Endothelial cell of umbilical vein (primary cell): ENCODE measurements at regions of chr5 and their contacts with region 1.

Region 1: GRCh38 chr5:43066799-43067741 is 27.0 kb upstream of the ANXA2R start:
- DNase-seq: peak; percentile 91
- H3K4me3 ChIP-seq: peak overlapping the region; percentile 24 to 76 (median 76)
- H3K27ac ChIP-seq: peak overlapping the region; percentile 86
- H3K4me1 ChIP-seq: peaks cover 24% of the 10 kb centered on the region
- H3K27me3 ChIP-seq: no peaks in the 10 kb centered on the region
- CTCF ChIP-seq: no peak
- POLR2A ChIP-seq: peak; percentile 73

Region 2: DNA sequence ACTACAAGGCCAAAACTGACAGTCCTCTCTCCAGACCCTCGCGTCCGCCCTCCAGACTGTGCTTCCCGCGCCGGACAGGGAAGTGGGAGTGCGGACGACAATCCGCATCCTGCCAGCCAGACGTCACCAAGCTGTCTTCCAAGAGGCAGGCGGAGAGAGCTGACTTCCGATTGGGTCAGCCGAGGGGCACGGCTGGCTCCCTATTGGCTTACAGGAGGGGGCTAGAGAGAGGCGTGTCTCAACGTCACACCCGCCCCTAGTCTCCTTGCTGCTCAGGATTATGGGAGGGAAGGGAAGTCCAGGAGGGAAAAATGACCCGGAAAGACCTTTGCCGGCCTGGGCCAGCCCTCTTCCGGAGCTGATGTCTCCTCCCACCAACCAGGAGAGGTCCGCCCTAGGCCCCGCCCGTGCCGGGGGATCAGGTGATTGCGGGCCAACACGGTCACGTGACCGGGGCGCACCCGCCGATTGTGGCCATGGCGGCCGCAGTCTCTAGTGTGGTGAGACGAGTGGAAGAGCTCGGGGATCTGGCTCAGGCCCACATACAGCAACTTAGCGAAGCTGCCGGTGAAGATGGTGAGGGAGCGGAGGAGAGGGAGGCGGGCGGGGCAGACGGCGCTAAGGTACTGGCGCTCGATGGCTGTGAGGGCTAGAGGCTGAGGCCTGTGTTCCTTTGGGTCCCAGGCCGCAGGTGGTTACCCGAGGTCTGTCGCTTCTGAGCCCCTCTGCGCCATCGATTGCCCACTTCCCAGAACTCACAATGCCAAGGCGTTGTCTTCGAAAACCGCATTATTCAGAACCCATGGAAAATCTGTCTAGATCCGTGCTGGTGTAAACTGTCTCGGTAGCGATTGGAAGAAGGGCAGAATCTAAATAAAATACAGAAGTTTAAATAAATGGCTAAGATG is 1162.9 kb before region 1 on chr5 and contains the start of gene RIMOC1:
- CTCF ChIA-PET with region 1: no interaction called
- POLR2A ChIA-PET with region 1: no interaction called
- dilution Hi-C with region 1: no loop called
- intact Hi-C with region 1: loop called (anchors 1 kb)
- DNase-seq: peak; percentile 100
- H3K4me3 ChIP-seq: peak within 1 kb of the TSS; percentile 68 to 96 (median 91)
- H3K27ac ChIP-seq: peak within 1 kb of the TSS; percentile 86
- H3K4me1 ChIP-seq: peaks cover 14% of the 10 kb centered on the region
- H3K27me3 ChIP-seq: peaks cover 0 to 2% of the 10 kb centered on the region in 2 experiments
- CTCF ChIP-seq: no peak
- POLR2A ChIP-seq: peak; percentile 82
- total RNA-seq, gene RIMOC1: 27.4 and 32.0 TPM in 2 replicates

Region 3: GRCh38 chr5:42994246-42995151 is 72.6 kb before region 1 on chr5:
- CTCF ChIA-PET with region 1: interaction called, 18 read pairs
- POLR2A ChIA-PET with region 1: interaction called, 4 read pairs
- dilution Hi-C with region 1: no loop called
- intact Hi-C with region 1: loop called (anchors 1 kb)
- DNase-seq: peak; percentile 96
- H3K4me3 ChIP-seq: peak overlapping the region; percentile 59 to 94 (median 61)
- H3K27ac ChIP-seq: peak overlapping the region; percentile 98
- H3K4me1 ChIP-seq: peaks cover 30% of the 10 kb centered on the region
- H3K27me3 ChIP-seq: no peaks in the 10 kb centered on the region
- CTCF ChIP-seq: peak; percentile 85 to 86
- POLR2A ChIP-seq: peak; percentile 52

Region 4: GRCh38 chr5:43019614-43020293 is 47.3 kb before region 1 on chr5:
- CTCF ChIA-PET with region 1: interaction called, 17 read pairs
- POLR2A ChIA-PET with region 1: no interaction called
- dilution Hi-C with region 1: no loop called
- intact Hi-C with region 1: loop called (anchors 1 kb)
- DNase-seq: peak; percentile 87
- H3K4me3 ChIP-seq: peak overlapping the region; percentile 36 to 83 (median 65)
- H3K27ac ChIP-seq: peak overlapping the region; percentile 93
- H3K4me1 ChIP-seq: peaks cover 19% of the 10 kb centered on the region
- H3K27me3 ChIP-seq: no peaks in the 10 kb centered on the region
- CTCF ChIP-seq: peak; percentile 51 to 61
- POLR2A ChIP-seq: no peak

Region 5: DNA sequence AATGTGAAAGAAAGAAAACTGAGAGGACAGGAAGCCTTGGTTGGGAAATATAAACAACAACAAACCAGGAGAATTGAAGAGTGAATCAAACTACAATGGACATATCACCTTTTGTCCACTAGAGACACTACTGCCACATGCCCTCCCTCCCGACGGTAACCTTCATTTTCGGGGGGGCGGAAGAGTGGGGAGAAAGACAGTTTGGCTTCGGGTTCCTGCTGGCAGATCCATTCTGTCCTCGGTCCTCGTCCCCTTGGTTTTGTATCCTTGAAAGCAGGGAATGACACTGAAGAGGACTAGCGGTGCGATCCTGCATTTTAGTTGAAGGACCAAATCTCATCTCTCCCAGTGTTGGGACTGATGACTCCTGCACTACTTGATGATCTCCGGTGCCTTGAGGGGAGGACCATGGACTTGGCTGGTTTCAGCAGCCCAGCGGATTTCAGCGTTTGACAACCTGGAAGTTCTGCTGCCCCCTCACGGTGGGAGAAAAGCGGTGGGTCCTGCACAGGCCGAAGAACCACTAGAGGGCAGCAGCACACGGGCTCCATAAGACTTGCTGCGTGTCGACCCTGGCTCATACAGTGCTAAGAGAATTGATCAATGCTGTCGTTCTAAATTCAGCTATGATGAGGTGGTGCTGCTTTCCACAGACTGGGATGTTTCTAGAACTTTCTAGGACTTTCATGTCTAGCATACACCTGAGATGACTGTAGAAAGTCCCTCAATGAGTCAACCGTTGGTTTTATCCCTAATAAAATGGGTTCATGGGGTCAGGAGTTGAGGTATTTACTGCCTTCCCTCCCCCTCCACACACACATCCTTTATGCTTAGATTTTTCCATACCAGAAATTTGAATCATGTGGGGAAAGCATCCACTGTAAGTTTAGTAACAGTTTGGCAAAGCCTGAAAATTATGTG is 38.6 kb after region 1 on chr5:
- CTCF ChIA-PET with region 1: interaction called, 3 read pairs
- POLR2A ChIA-PET with region 1: no interaction called
- dilution Hi-C with region 1: no loop called
- intact Hi-C with region 1: loop called (anchors 1 kb)
- DNase-seq: peak; percentile 98
- H3K4me3 ChIP-seq: peak overlapping the region in 2 of 3 experiments; percentile 20 to 29
- H3K27ac ChIP-seq: no peak overlapping the region
- H3K4me1 ChIP-seq: no peaks in the 10 kb centered on the region
- H3K27me3 ChIP-seq: no peaks in the 10 kb centered on the region
- CTCF ChIP-seq: peak; percentile 100
- POLR2A ChIP-seq: no peak

Region 6: DNA sequence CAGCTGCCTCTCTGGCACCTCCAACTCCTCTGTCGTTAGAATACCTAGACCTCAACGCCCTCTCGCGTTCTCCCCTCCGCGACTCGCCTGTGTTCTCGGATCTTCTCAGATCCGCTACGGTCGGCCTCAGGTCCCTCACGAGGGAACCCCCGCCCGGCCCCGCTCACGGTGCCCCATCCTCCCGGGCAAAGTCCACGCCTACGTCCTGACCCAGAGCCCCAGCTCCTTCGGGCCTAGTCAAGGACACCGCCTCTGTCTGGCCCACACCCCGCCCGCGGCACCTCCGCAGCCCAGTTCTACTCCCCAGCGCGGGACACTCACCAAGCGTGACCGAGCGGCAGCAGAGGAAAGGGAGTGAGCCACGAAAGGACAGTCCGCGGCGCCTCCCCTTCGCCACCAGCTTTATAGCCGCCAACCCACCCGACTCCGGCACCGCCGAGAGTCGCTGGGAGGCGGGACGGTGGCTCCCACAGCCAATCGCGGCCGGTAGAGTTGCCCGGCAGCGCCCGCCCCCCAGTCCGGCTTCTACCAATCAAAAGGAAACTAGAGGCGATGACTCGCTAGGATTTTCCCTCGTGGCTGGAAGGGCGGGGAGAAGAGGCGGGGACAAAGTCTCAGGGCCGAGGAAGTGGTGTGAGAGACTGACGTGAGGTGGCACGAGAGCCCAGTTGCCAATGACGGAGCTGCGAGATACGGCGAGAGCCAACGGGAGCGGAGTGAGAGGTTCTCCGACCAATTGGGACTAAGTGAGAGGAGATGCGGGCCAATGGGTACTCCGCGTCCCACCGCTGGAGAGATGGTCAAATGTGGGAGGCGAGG is 246.2 kb after region 1 on chr5 and contains the start of gene HMGCS1:
- CTCF ChIA-PET with region 1: no interaction called
- POLR2A ChIA-PET with region 1: no interaction called
- dilution Hi-C with region 1: no loop called
- intact Hi-C with region 1: loop called (anchors 5 kb)
- DNase-seq: peak; percentile 100
- H3K4me3 ChIP-seq: peak within 1 kb of the TSS; percentile 73 to 91 (median 75)
- H3K27ac ChIP-seq: peak within 1 kb of the TSS; percentile 43
- H3K4me1 ChIP-seq: peaks cover 35% of the 10 kb centered on the region
- H3K27me3 ChIP-seq: no peaks in the 10 kb centered on the region
- CTCF ChIP-seq: peak in 1 of 2 donors; percentile 5
- POLR2A ChIP-seq: peak; percentile 57
- total RNA-seq, gene HMGCS1: 133 and 149 TPM in 2 replicates